RWPE1 (cell line): ENCODE measurements at regions of chr6 and their contacts with region 1.

Region 1: DNA sequence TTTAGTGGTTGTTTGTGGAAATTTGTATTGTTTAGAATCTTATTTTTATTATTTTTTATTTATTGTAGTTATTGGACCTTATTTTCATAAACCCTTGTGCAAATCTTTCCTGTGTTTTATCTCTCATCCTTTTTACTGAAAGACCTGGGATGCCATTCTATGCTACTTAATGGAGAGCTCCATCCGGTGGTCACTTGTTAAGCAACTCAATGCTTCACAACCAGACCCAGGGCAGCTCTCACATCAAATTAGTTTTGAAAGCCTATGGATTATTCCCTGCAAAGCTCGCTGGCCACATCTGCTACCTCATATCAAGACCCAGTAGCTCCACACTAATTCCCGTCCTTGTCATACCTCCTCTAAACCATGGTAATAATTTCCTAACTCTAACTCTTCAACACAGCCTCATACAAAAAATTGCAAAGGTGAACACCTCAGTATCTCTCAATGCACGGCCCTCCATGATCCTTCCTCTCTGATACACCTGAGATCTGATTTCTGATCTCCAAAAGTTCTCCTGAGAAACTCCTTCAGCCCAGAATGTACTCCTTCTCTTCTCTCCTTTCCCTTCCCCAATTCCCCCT is 296.6 kb upstream of the MANEA start:
- DNase-seq: peak; percentile 20
- H3K27ac ChIP-seq: no peak overlapping the region
- CTCF ChIP-seq: peak; percentile 62

Region 2: DNA sequence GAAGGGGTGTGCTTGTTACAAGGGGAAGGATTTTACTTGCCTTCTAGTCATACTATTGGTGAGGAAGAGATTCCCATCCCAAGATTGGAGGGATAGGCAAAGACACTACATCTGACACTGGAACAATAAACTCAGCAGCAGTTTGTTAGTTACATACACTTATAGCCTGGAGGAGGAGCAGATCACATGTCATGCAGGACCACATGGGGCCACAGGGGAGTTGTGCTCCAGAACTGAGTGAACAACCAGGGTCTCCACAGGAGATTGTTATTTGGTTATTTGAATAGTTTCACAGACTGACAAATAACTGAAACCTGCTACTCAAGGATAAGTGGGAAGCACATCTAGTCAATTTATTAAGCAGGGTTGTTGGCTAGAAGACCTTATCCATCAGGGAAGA is 262.9 kb before region 1 on chr6:
- CTCF ChIA-PET with region 1: no interaction called
- POLR2A ChIA-PET with region 1: no interaction called
- DNase-seq: no peak
- H3K27ac ChIP-seq: no peak overlapping the region
- CTCF ChIP-seq: no peak

Region 3: GRCh38 chr6:95133578-95133977 is 147.2 kb before region 1 on chr6:
- CTCF ChIA-PET with region 1: no interaction called
- POLR2A ChIA-PET with region 1: no interaction called
- DNase-seq: peak; percentile 10
- H3K27ac ChIP-seq: no peak overlapping the region
- CTCF ChIP-seq: peak; percentile 62

Region 4: GRCh38 chr6:95203153-95203754 is 77.5 kb before region 1 on chr6:
- CTCF ChIA-PET with region 1: interaction called, 29 read pairs
- POLR2A ChIA-PET with region 1: no interaction called
- DNase-seq: peak; percentile 25
- H3K27ac ChIP-seq: no peak overlapping the region
- CTCF ChIP-seq: peak; percentile 78

Region 5: GRCh38 chr6:96075826-96076225 is 795.0 kb after region 1 on chr6:
- CTCF ChIA-PET with region 1: no interaction called
- POLR2A ChIA-PET with region 1: no interaction called
- DNase-seq: no peak
- H3K27ac ChIP-seq: no peak overlapping the region
- CTCF ChIP-seq: no peak